ENCODE measurements at regions of chr4 and their contacts with region 1.

Region 1: GRCh38 chr4:104964410-104965175 is 182.1 kb upstream of the TET2 start:
- DNase-seq: no peak
- H3K4me3 ChIP-seq: no peak overlapping the region
- H3K27ac ChIP-seq: no peak overlapping the region
- H3K4me1 ChIP-seq: peaks cover 10% of the 10 kb centered on the region
- H3K27me3 ChIP-seq: no peaks in the 10 kb centered on the region
- CTCF ChIP-seq: no peak

Region 2: DNA sequence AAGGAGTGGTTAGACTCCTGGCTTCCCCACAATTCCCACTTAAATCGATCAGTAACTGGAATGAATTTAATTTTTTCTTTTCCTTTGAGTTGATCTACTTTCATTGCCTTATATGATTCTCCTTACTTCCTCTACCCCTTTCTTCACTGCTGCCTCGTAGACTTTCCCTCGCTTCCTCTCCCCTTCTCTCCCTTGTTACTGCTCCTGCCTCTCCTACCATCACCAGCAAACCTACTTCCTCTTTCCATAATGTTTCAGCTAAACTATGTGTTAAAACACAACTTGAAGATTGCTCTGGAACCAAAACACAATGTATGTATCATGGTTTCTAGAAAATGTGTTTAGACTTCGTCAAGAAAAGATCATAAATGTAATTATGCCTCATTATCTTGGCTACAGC is 50.0 kb after region 1 on chr4:
- CTCF ChIA-PET with region 1: no interaction called
- dilution Hi-C with region 1: loop called (anchors 5 kb)
- in situ Hi-C with region 1: no loop called
- intact Hi-C with region 1: no loop called
- DNase-seq: no peak
- H3K4me3 ChIP-seq: no peak overlapping the region
- H3K27ac ChIP-seq: no peak overlapping the region
- H3K4me1 ChIP-seq: no peaks in the 10 kb centered on the region
- H3K27me3 ChIP-seq: no peaks in the 10 kb centered on the region
- CTCF ChIP-seq: no peak

Region 3: GRCh38 chr4:105291925-105292324 is 327.3 kb after region 1 on chr4:
- CTCF ChIA-PET with region 1: no interaction called
- dilution Hi-C with region 1: no loop called
- in situ Hi-C with region 1: no loop called
- intact Hi-C with region 1: no loop called
- DNase-seq: no peak
- H3K4me3 ChIP-seq: no peak overlapping the region
- H3K27ac ChIP-seq: no peak overlapping the region
- H3K4me1 ChIP-seq: no peaks in the 10 kb centered on the region
- H3K27me3 ChIP-seq: no peaks in the 10 kb centered on the region
- CTCF ChIP-seq: no peak

Measured in mammary epithelial cell (primary cell).